Caco-2 (cell line): ENCODE measurements at regions of chr11 and their contacts with region 1.

Region 1: DNA sequence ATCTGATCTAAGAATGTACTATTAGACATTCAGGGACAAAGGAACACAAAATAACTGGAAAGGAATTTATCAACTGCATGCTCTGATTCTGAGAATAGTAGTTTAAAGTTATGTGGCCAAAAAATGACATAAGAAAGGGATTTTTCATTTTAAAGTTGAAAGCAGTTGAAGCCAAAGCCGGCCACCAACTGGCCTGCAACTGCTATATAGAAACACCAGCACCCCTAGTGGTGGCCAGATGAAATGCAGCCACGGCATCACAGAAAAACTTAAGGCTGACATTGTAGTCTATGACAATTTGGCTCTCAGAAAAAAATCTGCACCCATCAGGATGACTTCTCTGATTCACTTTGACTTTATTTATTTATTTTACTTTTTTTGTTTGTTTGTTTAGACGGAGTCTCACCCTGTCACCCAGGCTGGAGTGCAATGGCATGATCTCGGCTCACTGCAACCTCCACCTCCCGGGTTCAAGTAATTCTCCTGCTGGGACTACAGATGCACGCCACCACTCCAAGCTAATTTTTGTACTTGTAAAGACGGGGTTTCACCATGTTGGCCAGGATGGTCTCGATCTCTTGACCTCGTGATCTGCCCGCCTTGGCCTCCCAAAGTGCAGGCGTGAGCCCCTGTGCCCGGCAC is 59.2 kb downstream of the SLC35F2 start:
- DNase-seq: peak; percentile 82 to 85
- H3K4me3 ChIP-seq: no peak overlapping the region
- H3K4me3 Mint-ChIP-seq: no peak overlapping the region
- H3K27ac Mint-ChIP-seq: no peak overlapping the region
- H3K4me1 ChIP-seq: peaks cover 4% of the 10 kb centered on the region
- H3K4me1 Mint-ChIP-seq: no peaks in the 10 kb centered on the region
- H3K27me3 ChIP-seq: no peaks in the 10 kb centered on the region
- H3K27me3 Mint-ChIP-seq: no peaks in the 10 kb centered on the region
- CTCF ChIP-seq: peak; percentile 98 to 99

Region 2: GRCh38 chr11:107741044-107741823 is 58.1 kb before region 1 on chr11:
- CTCF ChIA-PET with region 1: interaction called, 3 read pairs
- POLR2A ChIA-PET with region 1: no interaction called
- intact Hi-C with region 1: loop called (anchors 1 kb)
- DNase-seq: peak in 1 of 2 experiments; percentile 37
- H3K4me3 ChIP-seq: no peak overlapping the region
- H3K4me3 Mint-ChIP-seq: no peak overlapping the region
- H3K27ac Mint-ChIP-seq: no peak overlapping the region
- H3K4me1 ChIP-seq: no peaks in the 10 kb centered on the region
- H3K4me1 Mint-ChIP-seq: no peaks in the 10 kb centered on the region
- H3K27me3 ChIP-seq: no peaks in the 10 kb centered on the region
- H3K27me3 Mint-ChIP-seq: peaks cover 16% of the 10 kb centered on the region
- CTCF ChIP-seq: peak; percentile 82 to 89

Region 3: DNA sequence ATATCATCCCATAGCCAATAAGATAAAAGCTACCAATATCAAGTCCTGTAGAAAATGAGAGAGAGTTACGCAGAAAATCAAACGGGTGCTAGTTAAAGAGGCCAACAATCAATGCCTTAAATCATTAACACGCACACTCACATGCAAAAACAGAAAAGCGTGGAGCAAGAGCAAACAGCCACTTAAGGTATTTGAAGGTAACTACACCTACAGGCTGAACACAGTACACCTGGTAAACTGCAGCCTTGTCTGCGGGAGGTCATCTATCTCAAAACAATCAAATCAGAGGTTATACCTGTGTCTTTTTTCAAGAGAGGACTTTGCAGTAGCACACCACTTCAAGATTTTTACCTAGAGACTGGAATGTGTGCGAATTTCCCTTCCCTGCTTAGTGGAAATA is 35.7 kb after region 1 on chr11:
- CTCF ChIA-PET with region 1: no interaction called
- POLR2A ChIA-PET with region 1: no interaction called
- intact Hi-C with region 1: loop called (anchors 2 kb)
- DNase-seq: peak in 1 of 2 experiments; percentile 47
- H3K4me3 ChIP-seq: no peak overlapping the region
- H3K4me3 Mint-ChIP-seq: no peak overlapping the region
- H3K27ac Mint-ChIP-seq: no peak overlapping the region
- H3K4me1 ChIP-seq: peaks cover 42% of the 10 kb centered on the region
- H3K4me1 Mint-ChIP-seq: peaks cover 44% of the 10 kb centered on the region
- H3K27me3 ChIP-seq: no peaks in the 10 kb centered on the region
- H3K27me3 Mint-ChIP-seq: no peaks in the 10 kb centered on the region
- CTCF ChIP-seq: peak in 1 of 2 experiments; percentile 42

Region 4: GRCh38 chr11:107858217-107859070 is 59.1 kb after region 1 on chr11 and contains the start of gene SLC35F2:
- CTCF ChIA-PET with region 1: no interaction called
- POLR2A ChIA-PET with region 1: no interaction called
- intact Hi-C with region 1: loop called (anchors 1 kb)
- DNase-seq: peak; percentile 90 to 91
- H3K4me3 ChIP-seq: peak within 1 kb of the TSS; percentile 50
- H3K4me3 Mint-ChIP-seq: peak within 1 kb of the TSS; percentile 93
- H3K27ac Mint-ChIP-seq: peak within 1 kb of the TSS; percentile 85
- H3K4me1 ChIP-seq: peaks cover 5% of the 10 kb centered on the region
- H3K4me1 Mint-ChIP-seq: peaks cover 7% of the 10 kb centered on the region
- H3K27me3 ChIP-seq: no peaks in the 10 kb centered on the region
- H3K27me3 Mint-ChIP-seq: no peaks in the 10 kb centered on the region
- CTCF ChIP-seq: peak in 1 of 2 experiments; percentile 24
- total RNA-seq, gene SLC35F2: 42.5 and 44.9 TPM in 2 replicates